SK-N-SH (cell line): ENCODE measurements at regions of chr10 and their contacts with region 1.

Region 1: DNA sequence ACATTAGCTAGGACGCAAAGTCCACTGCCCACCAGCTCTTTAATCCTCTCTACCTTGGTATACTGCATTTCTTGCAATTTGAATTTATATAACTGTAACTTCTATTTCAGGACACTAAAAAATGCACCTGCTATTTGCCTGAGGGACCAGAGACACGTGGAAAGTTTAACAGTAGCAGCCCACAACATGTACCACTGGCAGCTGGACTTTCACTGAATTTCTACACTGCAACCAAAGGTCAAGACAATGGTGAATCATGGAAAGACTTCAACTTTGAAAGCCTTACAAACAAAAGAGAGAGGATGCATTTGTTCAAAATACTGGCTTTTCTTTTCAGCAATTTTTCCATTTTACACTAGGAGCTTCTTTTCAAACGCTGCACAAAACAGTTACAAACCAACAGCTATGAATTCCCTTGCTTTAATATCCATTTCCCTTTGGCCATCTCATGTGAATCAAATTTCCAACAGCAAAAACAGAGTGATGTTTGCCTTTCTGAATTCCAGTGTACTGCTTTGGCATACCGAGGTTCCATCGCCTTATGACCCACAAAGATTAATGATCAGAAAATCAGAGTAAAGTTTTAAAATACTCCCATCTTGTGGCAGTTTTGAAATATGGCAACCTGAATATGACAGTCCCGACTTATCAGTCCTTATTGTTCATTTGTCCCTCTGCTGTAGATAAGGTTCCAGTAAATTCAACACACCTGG is 29.9 kb upstream of the HNRNPH3 start:
- DNase-seq: peak; percentile 59
- H3K4me3 ChIP-seq: no peak overlapping the region
- H3K27ac ChIP-seq: no peak overlapping the region
- H3K4me1 ChIP-seq: peaks cover 5 to 8% of the 10 kb centered on the region in 2 experiments; a peak in 2 of 4 replicates
- H3K27me3 ChIP-seq: no peaks in the 10 kb centered on the region
- CTCF ChIP-seq: peak; percentile 72
- EP300 ChIP-seq: no peak
- RAD21 ChIP-seq: peak; percentile 85

Region 2: GRCh38 chr10:67849331-67850011 is 452.5 kb before region 1 on chr10:
- CTCF ChIA-PET with region 1: interaction called, 30 read pairs
- POLR2A ChIA-PET with region 1: no interaction called
- DNase-seq: peak; percentile 88
- H3K4me3 ChIP-seq: peak overlapping the region; percentile 69 to 86
- H3K27ac ChIP-seq: peak overlapping the region; percentile 89 to 91
- H3K4me1 ChIP-seq: peaks cover 0 to 3% of the 10 kb centered on the region in 2 experiments; a peak in 1 of 4 replicates
- H3K27me3 ChIP-seq: no peaks in the 10 kb centered on the region
- CTCF ChIP-seq: no peak
- EP300 ChIP-seq: no peak
- RAD21 ChIP-seq: no peak

Region 3: GRCh38 chr10:68156373-68157185 is 145.4 kb before region 1 on chr10:
- CTCF ChIA-PET with region 1: interaction called, 14 read pairs
- POLR2A ChIA-PET with region 1: no interaction called
- DNase-seq: peak; percentile 35
- H3K4me3 ChIP-seq: no peak overlapping the region; a peak in 1 of 4 replicates
- H3K27ac ChIP-seq: no peak overlapping the region
- H3K4me1 ChIP-seq: peaks cover 11 to 27% of the 10 kb centered on the region in 2 experiments; a peak in 3 of 4 replicates
- H3K27me3 ChIP-seq: no peaks in the 10 kb centered on the region
- CTCF ChIP-seq: peak; percentile 93
- EP300 ChIP-seq: no peak
- RAD21 ChIP-seq: peak; percentile 86

Region 4: DNA sequence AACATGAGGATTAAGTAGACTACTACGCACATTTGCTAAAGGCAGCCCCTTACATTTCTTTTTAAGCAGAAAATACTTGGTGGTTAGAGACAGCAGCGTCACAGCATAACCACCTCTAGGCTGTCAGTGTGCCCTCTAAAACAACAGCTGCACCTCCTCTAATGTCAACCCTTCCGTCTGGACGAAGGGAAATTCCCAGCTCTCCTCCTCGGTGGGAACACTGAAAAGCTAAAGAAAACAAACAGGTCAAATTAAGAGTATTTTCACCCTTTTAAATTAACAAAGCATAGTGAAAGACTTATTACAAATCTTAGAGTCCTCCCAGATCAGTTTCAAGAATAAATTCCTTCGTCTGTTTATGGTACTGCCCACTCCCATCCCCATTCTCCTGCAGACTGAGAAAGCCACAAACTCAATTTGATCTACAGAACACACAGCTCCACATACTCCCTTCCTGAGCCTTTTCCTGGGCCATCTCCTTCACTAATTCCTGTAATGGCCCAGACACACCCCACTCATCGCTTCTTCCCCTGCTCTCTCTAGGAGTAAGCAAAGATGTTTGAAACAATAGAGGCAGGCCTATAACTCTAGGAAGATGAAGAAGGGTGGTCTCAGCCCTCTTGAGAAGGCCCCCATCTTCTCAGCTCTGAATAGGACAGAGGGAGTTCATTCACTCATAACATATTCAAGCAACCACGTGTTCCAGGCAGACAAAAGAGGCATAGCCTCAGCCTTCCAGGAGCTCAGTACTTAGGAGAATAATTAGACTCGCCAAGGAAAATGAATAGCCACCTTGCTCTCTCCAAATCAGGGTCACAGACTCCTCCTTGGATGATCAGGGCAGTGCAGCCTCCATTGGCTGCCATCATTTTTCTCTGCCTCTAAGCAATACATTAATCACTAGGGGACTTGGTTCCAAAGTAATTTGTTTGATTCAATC is 17.6 kb before region 1 on chr10:
- CTCF ChIA-PET with region 1: interaction called, 10 read pairs
- POLR2A ChIA-PET with region 1: interaction called, 3 read pairs
- DNase-seq: no peak
- H3K4me3 ChIP-seq: no peak overlapping the region
- H3K27ac ChIP-seq: no peak overlapping the region
- H3K4me1 ChIP-seq: no peaks in the 10 kb centered on the region
- H3K27me3 ChIP-seq: no peaks in the 10 kb centered on the region
- CTCF ChIP-seq: no peak
- EP300 ChIP-seq: no peak
- RAD21 ChIP-seq: no peak

Region 5: GRCh38 chr10:68318331-68319059 is 16.5 kb after region 1 on chr10:
- CTCF ChIA-PET with region 1: interaction called, 13 read pairs
- POLR2A ChIA-PET with region 1: no interaction called
- DNase-seq: no peak
- H3K4me3 ChIP-seq: no peak overlapping the region
- H3K27ac ChIP-seq: no peak overlapping the region
- H3K4me1 ChIP-seq: no peaks in the 10 kb centered on the region
- H3K27me3 ChIP-seq: no peaks in the 10 kb centered on the region
- CTCF ChIP-seq: no peak
- EP300 ChIP-seq: no peak
- RAD21 ChIP-seq: no peak

Region 6: GRCh38 chr10:68331455-68332258 is 29.7 kb after region 1 on chr10 and contains the start of gene HNRNPH3:
- CTCF ChIA-PET with region 1: interaction called, 12 read pairs
- POLR2A ChIA-PET with region 1: no interaction called
- DNase-seq: peak; percentile 95
- H3K4me3 ChIP-seq: peak within 1 kb of the TSS; percentile 85 to 91
- H3K27ac ChIP-seq: peak within 1 kb of the TSS; percentile 95 to 98
- H3K4me1 ChIP-seq: peaks cover 27 to 35% of the 10 kb centered on the region in 2 experiments
- H3K27me3 ChIP-seq: no peaks in the 10 kb centered on the region
- CTCF ChIP-seq: 0 out of 2 replicates have a peak, but pooled peaks have one; percentile 14
- EP300 ChIP-seq: 0 out of 4 replicates have a peak, but pooled peaks of 1 of the 2 experiments have one; percentile 3
- RAD21 ChIP-seq: no peak
- polyA plus RNA-seq, gene HNRNPH3: 58.4 and 73.0 TPM in 2 replicates